Heart right ventricle (tissue), 16 donors: ENCODE measurements at regions of chr6 and their contacts with region 1.

Region 1: DNA sequence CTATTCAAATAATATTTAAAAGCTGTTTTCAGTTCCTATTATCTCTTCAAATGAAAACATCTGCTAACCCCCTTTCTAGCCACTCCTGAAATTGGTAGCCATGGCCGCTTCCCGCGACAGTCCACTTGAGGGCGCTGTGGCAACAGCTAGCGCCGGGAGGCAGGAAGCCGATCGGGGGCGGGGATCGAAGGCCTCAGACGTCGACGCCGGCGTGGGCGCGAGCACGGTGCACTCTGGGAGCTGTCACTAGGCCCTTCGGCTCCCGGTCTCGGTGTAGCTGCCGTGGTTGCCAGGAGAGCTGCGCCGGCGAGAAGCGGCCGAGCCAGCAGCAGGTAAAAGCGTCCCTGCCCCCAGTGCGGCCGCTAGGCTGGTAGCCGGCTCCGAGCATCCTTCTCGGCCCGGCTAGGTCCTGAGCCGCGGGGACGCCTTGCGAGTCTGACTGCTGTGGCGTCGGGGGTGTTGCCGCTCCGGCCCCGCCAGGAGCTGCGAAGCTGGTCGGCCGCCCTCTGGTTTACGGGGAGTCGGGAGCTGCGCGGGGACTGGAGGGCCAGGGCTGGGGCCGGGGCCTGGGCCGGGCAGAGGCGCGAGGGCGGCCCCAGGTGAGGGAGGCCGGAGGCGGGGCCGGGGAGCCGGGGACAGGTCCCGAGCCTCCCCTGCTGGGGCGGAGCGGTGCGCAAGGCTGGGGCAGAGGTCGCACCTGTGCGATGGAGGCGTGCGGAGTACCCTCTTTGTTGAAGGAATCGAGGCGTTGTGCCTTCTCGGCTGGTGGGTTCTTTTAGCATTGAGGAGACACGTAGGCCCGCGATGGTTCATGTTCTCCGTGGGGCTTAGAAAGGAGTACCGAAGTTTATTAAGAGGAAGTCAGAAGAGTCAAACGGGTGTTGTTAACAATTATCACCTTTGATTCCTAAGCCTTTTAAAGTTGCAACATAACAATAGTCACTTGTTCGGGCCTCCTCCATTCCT is at the start of gene DOP1A:
- DNase-seq: peak; percentile 95 to 96
- ATAC-seq: peak; percentile 96 to 99 (median 96)
- H3K4me3 ChIP-seq: peak within 1 kb of the TSS; percentile 64 to 93 (median 78)
- H3K27ac ChIP-seq: peak within 1 kb of the TSS; percentile 39 to 93 (median 87)
- H3K4me1 ChIP-seq: peaks cover 0 to 62% (median 32%) of the 10 kb centered on the region in 9 donors
- H3K27me3 ChIP-seq: no peaks in the 10 kb centered on the region
- CTCF ChIP-seq: peak; percentile 93 to 100 (median 98)
- total RNA-seq, gene DOP1A: 10.0 to 26.8 (median 22.2) TPM

Region 2: DNA sequence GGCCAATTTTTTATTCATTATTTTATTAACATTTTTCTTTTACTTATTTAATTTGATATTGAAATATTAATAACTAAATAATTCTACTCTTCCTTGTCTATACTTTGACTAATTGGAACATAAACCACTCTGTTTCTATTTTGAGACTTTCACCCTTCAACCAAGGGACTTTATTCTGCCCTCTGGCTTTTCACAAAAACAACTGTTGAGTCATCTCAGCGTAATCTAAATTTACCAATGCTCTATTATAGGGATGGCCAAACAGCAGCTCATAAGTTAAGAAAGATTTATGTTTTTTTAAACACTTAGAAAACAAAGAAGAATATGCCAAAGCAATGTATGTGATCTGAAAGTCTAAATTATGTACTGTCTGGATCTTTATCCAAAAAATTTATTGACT is 46.4 kb after region 1 on chr6:
- intact Hi-C with region 1: loop called in 2 of 10 experiments (anchors 5 kb)
- DNase-seq: no peak
- ATAC-seq: peak in 2 of 8 donors; percentile 51 to 65
- H3K4me3 ChIP-seq: no peak overlapping the region
- H3K27ac ChIP-seq: no peak overlapping the region
- H3K4me1 ChIP-seq: peaks cover 0 to 7% (median 0%) of the 10 kb centered on the region in 9 donors
- H3K27me3 ChIP-seq: no peaks in the 10 kb centered on the region
- CTCF ChIP-seq: no peak

Region 3: DNA sequence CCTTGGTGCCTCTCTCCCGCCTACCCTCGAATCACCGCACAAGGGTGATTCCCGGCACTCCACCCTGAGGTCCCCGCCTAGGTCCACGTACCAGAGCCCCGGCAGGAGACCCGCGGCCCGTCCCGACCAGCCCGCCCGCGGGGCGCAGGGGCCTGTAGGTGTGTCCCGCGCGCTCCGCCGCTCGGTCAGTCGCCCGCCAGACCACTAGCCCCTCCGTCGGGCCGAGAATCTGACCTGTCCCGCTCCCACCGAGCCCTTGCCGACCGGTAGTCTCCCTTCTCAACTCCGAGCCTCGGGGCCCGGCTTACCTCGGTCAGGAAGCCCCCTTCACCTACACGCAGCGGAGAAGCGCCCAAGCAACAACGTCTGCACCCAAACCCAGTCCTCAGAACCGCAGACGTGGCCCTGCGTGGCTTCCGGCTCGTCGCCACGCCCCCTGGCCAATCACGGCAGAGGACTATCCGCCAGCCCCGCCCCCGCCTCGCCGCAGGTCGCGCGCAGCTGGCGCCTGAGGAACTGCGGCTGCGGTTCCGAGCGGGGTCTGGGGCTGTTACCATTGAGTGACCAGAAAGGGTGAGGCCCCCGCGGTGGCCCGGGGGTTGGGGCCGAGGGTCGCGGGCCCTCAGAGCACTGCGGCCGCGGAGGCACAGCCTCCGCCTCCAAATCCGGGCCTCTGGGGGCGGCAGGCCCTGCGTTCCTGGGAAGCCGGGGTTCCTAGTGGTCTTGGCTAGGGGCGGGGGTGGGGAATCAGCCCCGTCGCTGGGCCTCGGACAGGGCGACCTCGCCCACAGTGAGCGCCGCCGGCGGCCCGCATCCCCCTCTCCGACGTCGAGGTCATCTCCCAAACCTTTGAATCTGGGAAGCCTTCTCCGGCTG is 125.4 kb after region 1 on chr6 and contains the starts of genes PGM3 and RWDD2A:
- intact Hi-C with region 1: loop called in 7 of 10 experiments (anchors 1 to 10 kb)
- DNase-seq: peak; percentile 91 to 92
- ATAC-seq: peak; percentile 99 to 100 (median 100)
- H3K4me3 ChIP-seq: peak within 1 kb of the TSS; percentile 75 to 95 (median 88)
- H3K27ac ChIP-seq: peak within 1 kb of the TSS; percentile 67 to 92 (median 80)
- H3K4me1 ChIP-seq: peaks cover 0 to 38% (median 22%) of the 10 kb centered on the region in 9 donors
- H3K27me3 ChIP-seq: no peaks in the 10 kb centered on the region
- CTCF ChIP-seq: peak in 1 of 9 donors; percentile 5
- total RNA-seq, gene PGM3: 12.7 to 23.4 (median 17.0) TPM
- total RNA-seq, gene RWDD2A: 2.8 to 4.2 (median 3.4) TPM

Region 4: DNA sequence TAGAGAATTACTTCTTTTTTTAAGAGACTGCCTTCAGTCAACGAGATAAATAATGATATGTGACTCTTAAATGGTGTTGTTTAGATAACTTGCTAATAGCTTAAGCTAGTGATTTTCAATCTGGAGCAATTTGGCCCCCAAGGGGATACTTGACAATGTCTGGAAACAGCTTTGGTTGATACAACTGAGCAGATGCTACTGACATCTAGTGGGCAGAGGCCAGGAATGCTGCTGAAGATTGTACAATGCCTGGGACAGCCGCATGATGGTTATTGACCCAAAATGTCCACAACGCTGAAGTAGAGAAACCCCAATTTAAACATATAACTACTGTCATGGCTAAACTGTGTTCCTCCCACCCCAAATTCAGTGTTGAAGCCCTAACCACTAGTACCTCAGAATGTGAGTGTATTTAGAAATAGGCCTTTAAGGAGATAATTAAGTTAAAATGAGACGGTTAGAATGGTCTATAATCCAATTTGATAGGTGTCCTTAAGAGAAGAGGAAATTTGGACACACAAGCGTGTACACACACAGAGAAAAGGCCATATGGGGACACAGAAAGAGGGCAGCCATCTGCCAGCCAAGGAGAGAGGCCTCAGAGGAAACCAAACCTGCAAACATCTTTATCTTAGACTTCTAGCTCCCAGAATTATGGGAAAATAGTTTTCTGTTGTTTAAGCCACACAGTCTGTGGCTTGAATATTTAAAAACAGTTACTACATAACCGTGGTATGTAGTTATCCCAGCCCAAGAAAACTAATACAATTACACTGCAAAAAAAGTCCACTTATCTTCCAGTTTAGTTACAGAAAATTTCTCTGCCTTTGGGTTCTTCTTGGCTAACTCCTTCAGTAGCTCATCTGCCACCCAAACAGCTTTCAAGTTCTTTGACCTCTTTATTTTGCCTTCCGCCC is 147.7 kb after region 1 on chr6:
- intact Hi-C with region 1: loop called in 8 of 10 experiments (anchors 1 to 5 kb)
- DNase-seq: peak; percentile 21 to 71
- ATAC-seq: peak; percentile 77 to 97 (median 92)
- H3K4me3 ChIP-seq: no peak overlapping the region
- H3K27ac ChIP-seq: peak overlapping the region in 1 of 10 donors; percentile 8
- H3K4me1 ChIP-seq: peaks cover 0 to 4% (median 0%) of the 10 kb centered on the region in 9 donors
- H3K27me3 ChIP-seq: no peaks in the 10 kb centered on the region
- CTCF ChIP-seq: peak; percentile 53 to 92 (median 80)

Region 5: GRCh38 chr6:83431621-83432101 is 363.9 kb after region 1 on chr6:
- intact Hi-C with region 1: no loop called
- DNase-seq: no peak
- ATAC-seq: peak in 4 of 8 donors; percentile 11 to 27 (median 13)
- H3K4me3 ChIP-seq: peak overlapping the region in 5 of 10 donors; percentile 63 to 74 (median 72)
- H3K27ac ChIP-seq: peak overlapping the region in 9 of 10 donors; percentile 54 to 87 (median 70)
- H3K4me1 ChIP-seq: peaks cover 0 to 29% (median 4%) of the 10 kb centered on the region in 9 donors
- H3K27me3 ChIP-seq: no peaks in the 10 kb centered on the region
- CTCF ChIP-seq: no peak

Region 6: DNA sequence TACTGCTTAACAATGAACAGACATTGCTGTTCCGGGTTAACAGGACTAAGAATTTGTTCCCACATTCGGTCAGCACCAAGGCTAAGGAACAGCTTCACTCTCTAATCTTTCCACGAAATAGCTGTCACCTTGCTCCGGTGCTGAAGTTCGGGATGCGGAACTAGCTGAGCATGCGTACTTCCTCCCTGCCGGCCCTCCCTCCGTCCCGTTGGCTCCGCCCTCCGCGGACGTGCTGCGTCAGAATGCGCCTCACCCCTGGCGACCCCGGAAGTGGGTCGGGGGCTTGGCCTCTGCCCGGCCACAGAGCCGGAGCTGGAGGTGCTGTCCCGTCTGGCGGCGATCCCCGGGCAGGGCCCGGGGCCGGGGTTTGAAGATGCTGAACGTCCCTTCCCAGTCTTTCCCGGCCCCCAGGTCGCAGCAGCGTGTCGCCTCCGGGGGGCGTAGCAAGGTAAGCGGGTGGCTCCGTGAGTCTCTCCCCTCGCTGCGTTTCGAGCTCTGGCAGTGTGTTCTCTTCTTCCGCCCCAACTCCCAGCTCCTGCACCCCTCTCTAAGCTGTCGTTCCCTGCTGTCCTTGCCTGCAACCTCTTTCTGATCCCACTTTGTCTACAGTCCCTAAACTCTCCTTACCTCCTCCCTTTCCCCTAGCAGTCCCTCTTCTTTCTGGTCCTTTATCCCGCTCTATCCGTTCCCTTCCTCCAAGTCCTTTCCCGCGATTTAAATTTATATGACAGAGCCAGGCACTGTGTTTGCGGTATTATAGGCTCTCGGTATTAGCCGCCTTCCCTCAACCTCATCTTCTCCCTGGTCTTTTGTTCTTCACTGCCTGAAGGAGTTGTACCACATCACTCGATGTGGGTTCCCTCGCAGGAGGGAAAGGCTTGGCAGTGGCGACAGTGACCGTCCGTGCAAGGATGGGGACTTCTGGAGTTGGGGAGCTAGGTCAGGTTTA is 792.0 kb after region 1 on chr6 and contains the start of gene CYB5R4:
- intact Hi-C with region 1: loop called in 1 of 10 experiments (anchors 10 kb)
- DNase-seq: peak; percentile 95
- ATAC-seq: peak; percentile 100
- H3K4me3 ChIP-seq: peak within 1 kb of the TSS; percentile 67 to 94 (median 79)
- H3K27ac ChIP-seq: peak within 1 kb of the TSS; percentile 57 to 93 (median 84)
- H3K4me1 ChIP-seq: peaks cover 3 to 25% (median 21%) of the 10 kb centered on the region in 9 donors
- H3K27me3 ChIP-seq: peaks cover 0 to 21% (median 7%) of the 10 kb centered on the region in 7 donors
- CTCF ChIP-seq: peak in 8 of 9 donors; percentile 26 to 68 (median 47)
- total RNA-seq, gene CYB5R4: 10.6 to 20.0 (median 16.0) TPM